PC-9 (cell line): ENCODE measurements at regions of chr10 and their contacts with region 1.

Region 1: DNA sequence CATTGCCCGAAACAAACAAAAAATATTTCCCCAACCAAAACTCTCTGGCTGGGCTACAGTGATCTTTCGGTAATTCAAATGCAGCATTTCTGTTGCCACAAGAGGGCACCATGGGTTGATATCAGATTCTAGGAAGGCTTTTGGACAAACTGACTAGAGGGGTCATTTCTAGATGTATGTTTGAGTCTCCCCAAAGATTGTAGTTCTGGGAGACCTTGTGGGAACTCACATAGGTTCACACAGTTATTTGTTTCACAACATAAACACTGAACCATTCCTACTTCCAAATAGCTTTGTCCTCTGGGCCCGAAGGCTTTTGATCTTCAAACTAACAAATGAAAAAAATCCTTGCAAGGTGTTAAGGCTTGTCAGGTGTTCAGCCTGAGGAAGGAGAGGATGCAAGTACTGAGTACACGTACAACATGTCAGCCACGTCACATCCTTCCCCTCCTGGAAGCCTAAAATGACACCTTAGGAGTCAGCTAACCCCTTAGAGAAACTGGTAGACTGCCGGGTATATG is 37.0 kb upstream of the IL15RA start:
- DNase-seq: peak in 1 of 2 experiments; percentile 40
- H3K4me3 ChIP-seq: no peak overlapping the region
- H3K27ac ChIP-seq: no peak overlapping the region
- H3K4me1 ChIP-seq: no peaks in the 10 kb centered on the region
- H3K27me3 ChIP-seq: no peaks in the 10 kb centered on the region
- CTCF ChIP-seq: peak; percentile 74

Region 2: GRCh38 chr10:6052247-6053221 is 38.2 kb after region 1 on chr10:
- CTCF ChIA-PET with region 1: interaction called, 4 read pairs
- POLR2A ChIA-PET with region 1: no interaction called
- intact Hi-C with region 1: loop called (anchors 2 kb)
- DNase-seq: peak; percentile 62 to 71
- H3K4me3 ChIP-seq: peak overlapping the region; percentile 47; the same call in 1 of the 2 replicates
- H3K27ac ChIP-seq: peak overlapping the region; percentile 71
- H3K4me1 ChIP-seq: peaks cover 22% of the 10 kb centered on the region
- H3K27me3 ChIP-seq: no peaks in the 10 kb centered on the region
- CTCF ChIP-seq: no peak

Region 3: DNA sequence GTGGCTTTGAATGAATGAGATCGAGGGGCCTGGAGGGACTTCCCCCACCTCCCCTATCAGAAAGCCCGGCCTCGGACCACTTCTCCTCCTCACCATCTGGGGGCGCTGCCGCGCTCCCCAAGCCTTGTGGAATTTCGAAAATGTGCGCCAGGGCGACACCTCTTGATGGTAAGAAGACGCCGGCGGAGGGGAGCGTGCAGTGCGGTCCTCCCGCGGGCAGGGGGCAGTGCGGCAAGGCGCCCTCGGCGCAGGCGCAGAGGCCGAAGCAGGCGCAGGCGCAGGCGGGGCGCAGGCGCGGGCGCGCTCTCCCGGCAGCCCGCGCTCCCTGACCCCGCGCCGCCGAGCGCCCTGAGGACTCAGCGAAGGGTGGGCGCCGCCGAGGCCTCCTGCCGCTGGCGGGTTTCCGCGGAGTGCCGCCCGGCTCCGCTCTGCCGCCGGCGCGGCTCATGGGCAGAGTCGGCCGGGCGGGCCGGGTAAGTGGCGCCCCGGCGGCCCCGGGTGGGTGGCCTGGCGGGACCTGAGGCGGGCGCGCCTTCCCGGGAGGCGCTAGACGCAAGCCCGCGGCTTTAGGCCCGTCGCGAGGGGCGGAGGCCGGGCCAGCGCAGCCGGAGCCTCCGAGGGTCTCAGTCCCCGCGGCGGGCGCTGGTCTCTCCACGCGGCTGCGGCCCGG is 74.6 kb after region 1 on chr10 and contains the start of gene RBM17:
- CTCF ChIA-PET with region 1: no interaction called
- POLR2A ChIA-PET with region 1: no interaction called
- intact Hi-C with region 1: loop called (anchors 2 kb)
- DNase-seq: peak; percentile 69 to 97
- H3K4me3 ChIP-seq: peak within 1 kb of the TSS; percentile 71
- H3K27ac ChIP-seq: 0 out of 2 replicates have a peak within 1 kb of the TSS, but pooled peaks have one; percentile 19
- H3K4me1 ChIP-seq: peaks cover 16% of the 10 kb centered on the region
- H3K27me3 ChIP-seq: peaks cover 3% of the 10 kb centered on the region; the same call in 1 of the 2 replicates
- CTCF ChIP-seq: peak; percentile 97
- total RNA-seq, gene RBM17: 98.2 and 131 TPM in 2 replicates